AG04450 (cell line): ENCODE measurements at regions of chr11 and their contacts with region 1.

Region 1: GRCh38 chr11:75022759-75023396 is 34.1 kb downstream of the NEU3 start:
- DNase-seq: peak; percentile 72
- H3K4me3 ChIP-seq: no peak overlapping the region
- H3K27ac ChIP-seq: no peak overlapping the region
- H3K27me3 ChIP-seq: peaks cover 3% of the 10 kb centered on the region
- CTCF ChIP-seq: peak; percentile 99

Region 2: GRCh38 chr11:75241036-75241905 is 218.4 kb after region 1 on chr11:
- CTCF ChIA-PET with region 1: interaction called, 49 read pairs
- POLR2A ChIA-PET with region 1: no interaction called
- DNase-seq: peak; percentile 34
- H3K4me3 ChIP-seq: peak overlapping the region; percentile 60
- H3K27ac ChIP-seq: no peak overlapping the region
- H3K27me3 ChIP-seq: peaks cover 66% of the 10 kb centered on the region
- CTCF ChIP-seq: peak; percentile 51

Region 3: DNA sequence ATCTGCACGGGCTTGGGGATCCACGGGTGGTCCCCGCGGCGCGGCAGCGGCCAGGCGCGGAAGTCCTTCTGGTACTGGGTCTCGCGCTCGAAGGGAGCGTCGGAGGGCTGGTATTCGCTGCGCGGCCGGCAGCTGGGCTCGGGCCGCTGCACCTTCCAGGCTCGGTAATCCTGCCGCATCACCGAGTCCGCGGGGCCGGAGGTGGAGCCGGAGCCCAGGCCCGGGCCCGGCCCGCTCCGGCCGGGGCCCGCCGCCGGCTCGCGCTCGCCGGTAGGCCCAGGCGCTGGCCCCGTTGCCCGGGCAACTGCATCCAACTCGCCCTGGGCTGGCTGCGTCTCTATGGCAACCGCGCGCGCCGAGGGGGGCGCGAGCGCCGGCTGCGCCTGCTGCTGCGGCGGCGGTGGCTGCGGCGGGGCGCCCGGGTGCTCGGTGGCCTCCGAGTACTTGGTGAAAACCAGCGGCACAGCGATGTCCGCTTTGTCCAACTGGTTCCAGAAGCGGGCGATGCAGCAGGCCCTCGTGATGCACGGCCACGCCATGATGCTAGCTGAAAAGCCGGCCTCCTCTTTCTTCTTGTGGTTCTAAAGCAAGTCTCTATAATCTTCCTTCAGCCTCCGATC is 645.1 kb after region 1 on chr11:
- CTCF ChIA-PET with region 1: no interaction called
- POLR2A ChIA-PET with region 1: no interaction called
- DNase-seq: no peak
- H3K4me3 ChIP-seq: peak overlapping the region; percentile 43
- H3K27ac ChIP-seq: no peak overlapping the region
- H3K27me3 ChIP-seq: peaks cover 65% of the 10 kb centered on the region
- CTCF ChIP-seq: no peak